OCI-LY7 (cell line): ENCODE measurements at regions of chr3 and their contacts with region 1.

Region 1: DNA sequence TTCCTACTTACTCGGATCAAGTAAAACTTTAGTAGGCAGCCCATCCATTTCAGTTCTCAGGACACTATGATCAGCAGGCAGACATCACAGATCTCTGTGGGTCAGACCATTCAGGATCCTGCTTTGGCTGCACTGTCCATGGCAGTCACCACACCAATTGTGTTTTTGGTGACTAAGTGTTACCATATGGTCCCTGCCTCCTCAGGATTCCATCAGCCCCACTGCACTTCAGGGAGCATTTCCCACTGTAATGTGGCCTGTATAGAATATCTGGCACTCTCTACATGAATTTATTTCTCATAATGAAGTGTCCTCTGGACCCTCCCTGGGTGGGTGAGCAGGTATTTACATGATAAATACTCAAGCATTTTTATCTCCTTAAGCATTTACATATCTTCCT is 41.3 kb downstream of the ZNF445 start:
- DNase-seq: no peak
- H3K4me3 ChIP-seq: no peak overlapping the region
- H3K27ac ChIP-seq: no peak overlapping the region
- H3K4me1 ChIP-seq: peaks cover 14% of the 10 kb centered on the region
- CTCF ChIP-seq: no peak

Region 2: DNA sequence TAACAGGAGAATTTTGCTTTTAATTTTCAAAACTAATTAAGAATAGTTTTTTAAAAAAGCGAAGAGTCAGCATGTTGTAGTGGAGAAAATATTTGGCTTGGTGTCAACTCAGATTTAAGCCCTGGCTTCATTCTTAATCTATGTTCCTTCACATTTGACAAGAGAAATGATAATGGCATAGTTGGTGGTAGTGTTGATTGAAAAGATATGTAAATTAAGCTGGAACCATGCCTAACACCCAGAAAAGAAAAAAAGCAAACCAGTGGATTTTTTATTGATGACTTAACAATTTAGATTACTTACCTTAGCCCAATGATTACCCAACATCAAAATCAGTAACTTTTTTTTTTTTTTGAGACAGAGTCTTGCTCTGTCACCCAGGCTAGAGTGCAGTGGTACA is 70.2 kb before region 1 on chr3:
- CTCF ChIA-PET with region 1: no interaction called
- POLR2A ChIA-PET with region 1: interaction called, 10 read pairs
- intact Hi-C with region 1: no loop called
- DNase-seq: no peak
- H3K4me3 ChIP-seq: no peak overlapping the region
- H3K27ac ChIP-seq: no peak overlapping the region
- H3K4me1 ChIP-seq: no peaks in the 10 kb centered on the region
- CTCF ChIP-seq: no peak

Region 3: DNA sequence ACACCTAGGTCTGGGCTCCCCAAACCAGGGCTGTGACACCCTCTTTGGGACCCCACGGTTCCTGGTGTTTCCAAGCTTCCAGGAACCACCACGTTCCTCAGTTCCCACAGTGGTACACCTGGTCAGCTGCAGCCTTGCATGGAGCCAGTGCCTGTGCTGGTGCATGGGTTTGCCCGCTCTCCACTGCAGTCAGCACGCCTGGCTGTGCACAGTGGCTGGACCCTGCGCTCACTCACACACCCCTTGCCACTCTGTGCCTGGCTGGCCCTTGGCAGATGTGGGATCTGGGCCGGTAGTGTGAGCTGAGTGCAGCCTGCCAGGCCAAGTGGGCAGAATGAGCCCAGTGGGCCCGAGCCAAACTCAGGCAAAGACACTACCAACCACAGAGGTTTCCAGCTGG is 48.8 kb before region 1 on chr3:
- CTCF ChIA-PET with region 1: no interaction called
- POLR2A ChIA-PET with region 1: no interaction called
- intact Hi-C with region 1: no loop called
- DNase-seq: no peak
- H3K4me3 ChIP-seq: no peak overlapping the region
- H3K27ac ChIP-seq: no peak overlapping the region
- H3K4me1 ChIP-seq: no peaks in the 10 kb centered on the region
- CTCF ChIP-seq: no peak